ENCODE measurements at regions of chr17 and their contacts with region 1.

Region 1: DNA sequence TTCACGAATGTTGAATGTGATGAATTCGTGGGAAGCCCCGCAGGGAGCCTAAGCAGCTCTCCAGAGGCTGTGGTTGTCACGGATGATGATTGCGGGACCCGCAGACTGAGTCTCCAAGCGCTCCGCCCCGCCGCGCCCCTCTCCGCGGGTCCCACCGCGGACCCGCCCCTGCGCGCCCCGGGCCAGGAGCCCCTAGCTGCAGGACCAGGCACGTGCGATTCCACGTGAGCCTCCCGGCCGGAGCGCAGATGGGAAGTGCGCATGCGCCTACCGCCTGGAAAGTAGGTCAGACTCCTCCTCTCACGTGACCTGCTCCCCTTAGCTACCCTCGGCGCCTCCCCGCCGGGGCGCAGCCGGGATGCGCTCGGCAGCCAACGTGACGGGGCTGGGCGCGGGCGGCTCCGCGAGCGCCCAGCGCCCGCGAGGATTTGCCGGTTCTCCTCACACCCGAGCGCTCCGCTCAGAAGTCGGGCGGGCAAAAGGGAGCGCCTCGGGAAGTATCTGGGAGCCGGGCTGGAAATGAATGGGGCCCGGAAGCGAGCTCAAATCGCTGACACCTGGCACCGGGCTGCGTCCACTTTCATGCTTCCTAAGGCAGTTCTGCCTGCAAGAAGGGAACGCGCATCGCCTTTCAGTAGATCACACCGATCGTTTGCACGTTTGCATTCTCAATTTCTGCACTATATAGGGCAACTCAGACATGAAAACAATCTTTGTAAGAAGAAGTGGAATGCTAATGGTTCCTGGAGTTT is 26.4 kb upstream of the HLF start:
- DNase-seq: peak; percentile 84
- H3K4me3 Mint-ChIP-seq: peak overlapping the region; percentile 76
- H3K27ac Mint-ChIP-seq: peak overlapping the region; percentile 44
- H3K4me1 Mint-ChIP-seq: peaks cover 8% of the 10 kb centered on the region
- H3K27me3 Mint-ChIP-seq: no peaks in the 10 kb centered on the region
- CTCF ChIP-seq: no peak

Region 2: GRCh38 chr17:54876656-54877195 is 361.6 kb before region 1 on chr17:
- CTCF ChIA-PET with region 1: no interaction called
- intact Hi-C with region 1: no loop called
- DNase-seq: no peak
- H3K4me3 Mint-ChIP-seq: no peak overlapping the region
- H3K27ac Mint-ChIP-seq: no peak overlapping the region
- H3K4me1 Mint-ChIP-seq: no peaks in the 10 kb centered on the region
- H3K27me3 Mint-ChIP-seq: peaks cover 14% of the 10 kb centered on the region
- CTCF ChIP-seq: no peak

Region 3: GRCh38 chr17:55053855-55054254 is 184.5 kb before region 1 on chr17:
- CTCF ChIA-PET with region 1: no interaction called
- intact Hi-C with region 1: no loop called
- DNase-seq: no peak
- H3K4me3 Mint-ChIP-seq: no peak overlapping the region
- H3K27ac Mint-ChIP-seq: no peak overlapping the region
- H3K4me1 Mint-ChIP-seq: no peaks in the 10 kb centered on the region
- H3K27me3 Mint-ChIP-seq: no peaks in the 10 kb centered on the region
- CTCF ChIP-seq: no peak

Region 4: GRCh38 chr17:55264645-55265298 is 26.4 kb after region 1 on chr17 and contains the start of gene HLF:
- CTCF ChIA-PET with region 1: interaction called, 6 read pairs
- intact Hi-C with region 1: loop called (anchors 2 kb)
- DNase-seq: peak; percentile 75
- H3K4me3 Mint-ChIP-seq: peak within 1 kb of the TSS; percentile 64
- H3K27ac Mint-ChIP-seq: no peak within 1 kb of the TSS
- H3K4me1 Mint-ChIP-seq: no peaks in the 10 kb centered on the region
- H3K27me3 Mint-ChIP-seq: peaks cover 35% of the 10 kb centered on the region
- CTCF ChIP-seq: no peak
- total RNA-seq, gene HLF: 1.3 and 3.3 TPM in 2 replicates

Region 5: DNA sequence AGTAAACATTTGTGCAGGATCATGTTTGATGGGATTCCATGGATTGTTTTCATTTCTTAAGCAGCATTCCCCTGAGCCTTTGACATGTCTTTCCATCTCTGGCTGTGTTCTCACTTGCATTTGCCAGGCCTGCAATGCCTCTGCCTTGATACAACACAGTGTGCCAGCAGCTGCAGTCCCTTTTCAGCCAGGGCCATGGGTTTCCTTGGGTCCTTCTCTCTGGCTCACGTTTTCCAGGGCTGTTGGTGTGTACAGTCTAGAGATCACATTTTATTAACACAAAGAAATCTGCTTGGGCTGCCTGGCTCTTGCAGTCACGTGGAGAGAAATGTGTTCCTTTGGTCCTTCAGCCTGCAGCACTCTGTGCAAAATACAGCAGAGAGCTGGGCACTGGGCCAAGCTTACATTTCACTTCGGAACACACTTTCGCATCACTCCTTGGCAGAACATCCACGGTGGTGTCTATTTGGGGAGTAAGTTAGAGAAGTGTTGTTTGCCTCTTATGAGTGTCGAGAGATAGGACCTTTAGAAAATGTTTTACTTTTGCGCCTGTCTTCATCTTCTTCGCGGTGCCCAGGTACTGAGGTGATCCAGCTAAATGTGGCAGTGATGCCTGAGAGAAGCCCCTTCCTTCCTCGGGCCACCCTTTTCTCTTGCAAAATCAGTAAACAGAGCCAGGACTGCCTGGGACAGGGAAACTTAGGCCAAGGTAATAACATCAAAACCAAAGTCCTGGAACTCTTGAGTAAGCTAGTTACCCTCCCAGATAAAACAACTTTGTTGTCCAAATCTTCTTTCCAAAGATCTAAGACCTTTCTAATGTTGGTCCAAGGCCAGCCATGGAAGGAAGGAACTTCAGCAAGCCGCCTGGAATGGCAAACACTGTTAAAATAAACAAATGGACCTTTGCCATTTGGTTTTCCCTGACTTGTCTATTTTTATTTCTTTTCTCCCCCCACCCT is 47.3 kb after region 1 on chr17:
- CTCF ChIA-PET with region 1: no interaction called
- intact Hi-C with region 1: loop called (anchors 5 kb)
- DNase-seq: no peak
- H3K4me3 Mint-ChIP-seq: no peak overlapping the region
- H3K27ac Mint-ChIP-seq: peak overlapping the region; percentile 71
- H3K4me1 Mint-ChIP-seq: peaks cover 46% of the 10 kb centered on the region
- H3K27me3 Mint-ChIP-seq: no peaks in the 10 kb centered on the region
- CTCF ChIP-seq: no peak